ENCODE measurements at regions of chr10 and their contacts with region 1.

Region 1: DNA sequence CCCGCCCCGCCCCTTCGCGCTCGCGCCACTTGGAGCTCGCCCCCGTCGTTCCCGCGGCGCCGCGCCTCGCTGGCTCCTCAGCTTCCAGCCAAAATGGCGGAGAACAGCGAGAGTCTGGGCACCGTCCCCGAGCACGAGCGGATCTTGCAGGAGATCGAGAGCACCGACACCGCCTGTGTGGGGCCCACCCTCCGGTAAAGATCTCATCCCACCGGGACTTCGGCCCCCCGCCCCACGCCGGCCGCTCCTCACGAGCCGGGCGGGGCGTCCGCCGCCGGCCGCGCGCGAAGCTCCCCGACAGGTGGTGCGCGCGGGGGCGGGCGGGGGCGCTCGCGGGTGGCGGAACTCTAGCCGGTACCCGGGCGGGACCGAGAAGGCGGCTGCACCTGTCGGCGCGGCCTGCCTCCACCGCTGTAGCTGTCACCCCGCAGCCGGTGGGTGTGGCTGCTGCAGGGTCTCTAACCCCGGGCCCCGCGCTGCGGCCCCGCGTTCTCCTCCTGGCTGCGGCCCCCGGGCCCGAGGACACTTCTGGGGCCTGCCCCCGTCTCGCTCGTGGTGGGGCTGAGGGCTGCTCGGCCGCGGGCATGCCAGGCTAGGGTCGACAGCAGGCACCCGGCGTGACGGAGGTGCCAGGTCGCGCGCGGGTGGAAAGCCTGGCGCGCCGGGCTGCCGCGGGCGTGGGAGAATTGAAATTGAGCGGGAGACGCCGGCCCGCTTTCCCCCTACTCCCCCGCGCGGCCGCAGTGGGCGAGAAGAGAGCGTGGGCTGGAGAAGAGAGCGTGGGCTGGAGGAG is at the start of gene EXOC6:
- DNase-seq: peak; percentile 95
- H3K4me3 ChIP-seq: peak within 1 kb of the TSS; percentile 80 to 89
- H3K27ac ChIP-seq: peak within 1 kb of the TSS in 1 of 2 experiments; percentile 88; a peak in 2 of 4 replicates
- H3K4me1 ChIP-seq: no peaks in the 10 kb centered on the region; a peak in 2 of 4 replicates
- H3K27me3 ChIP-seq: no peaks in the 10 kb centered on the region
- CTCF ChIP-seq: 0 out of 2 replicates have a peak, but pooled peaks have one; percentile 9
- EP300 ChIP-seq: no peak
- RAD21 ChIP-seq: no peak
- polyA plus RNA-seq, gene EXOC6: 2.3 and 2.4 TPM in 2 replicates

Region 2: GRCh38 chr10:92822060-92822634 is 26.5 kb before region 1 on chr10:
- CTCF ChIA-PET with region 1: interaction called, 15 read pairs
- POLR2A ChIA-PET with region 1: no interaction called
- DNase-seq: no peak
- H3K4me3 ChIP-seq: no peak overlapping the region
- H3K27ac ChIP-seq: peak overlapping the region; percentile 47 to 80; a peak in 3 of 4 replicates
- H3K4me1 ChIP-seq: peaks cover 0 to 5% of the 10 kb centered on the region in 2 experiments; a peak in 3 of 4 replicates
- H3K27me3 ChIP-seq: no peaks in the 10 kb centered on the region
- CTCF ChIP-seq: no peak
- EP300 ChIP-seq: peak in 1 of 2 experiments; percentile 14; a peak in 1 of 4 replicates
- RAD21 ChIP-seq: no peak

Region 3: GRCh38 chr10:92832998-92833650 is 15.5 kb before region 1 on chr10:
- CTCF ChIA-PET with region 1: interaction called, 13 read pairs
- POLR2A ChIA-PET with region 1: interaction called, 3 read pairs
- DNase-seq: no peak
- H3K4me3 ChIP-seq: no peak overlapping the region
- H3K27ac ChIP-seq: no peak overlapping the region
- H3K4me1 ChIP-seq: peaks cover 0 to 16% of the 10 kb centered on the region in 2 experiments; a peak in 1 of 4 replicates
- H3K27me3 ChIP-seq: no peaks in the 10 kb centered on the region
- CTCF ChIP-seq: no peak
- EP300 ChIP-seq: no peak
- RAD21 ChIP-seq: no peak

Region 4: DNA sequence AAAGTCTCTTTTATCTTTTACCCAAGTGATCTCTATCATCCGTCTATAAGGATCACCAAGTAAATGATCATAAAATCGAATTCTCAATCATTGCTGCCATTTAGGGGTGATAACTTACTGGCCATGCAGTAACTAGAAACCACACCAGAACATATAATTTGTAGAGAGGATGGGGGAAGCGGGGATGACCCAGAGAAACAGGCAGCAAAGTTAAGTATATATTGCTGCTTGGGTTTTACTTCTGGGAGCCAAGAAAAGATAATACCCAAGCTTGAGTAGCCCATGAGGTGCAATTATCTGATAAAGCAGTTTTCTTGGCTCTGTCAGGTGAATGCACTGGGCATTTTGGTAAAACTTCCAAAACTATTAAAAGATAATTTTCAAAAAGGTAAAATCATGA is 18.6 kb after region 1 on chr10:
- CTCF ChIA-PET with region 1: interaction called, 11 read pairs
- POLR2A ChIA-PET with region 1: no interaction called
- DNase-seq: no peak
- H3K4me3 ChIP-seq: no peak overlapping the region
- H3K27ac ChIP-seq: no peak overlapping the region
- H3K4me1 ChIP-seq: no peaks in the 10 kb centered on the region
- H3K27me3 ChIP-seq: no peaks in the 10 kb centered on the region
- CTCF ChIP-seq: no peak
- EP300 ChIP-seq: no peak
- RAD21 ChIP-seq: no peak

Region 5: GRCh38 chr10:92880233-92880861 is 31.7 kb after region 1 on chr10:
- CTCF ChIA-PET with region 1: interaction called, 27 read pairs
- POLR2A ChIA-PET with region 1: no interaction called
- DNase-seq: peak; percentile 37
- H3K4me3 ChIP-seq: no peak overlapping the region
- H3K27ac ChIP-seq: no peak overlapping the region
- H3K4me1 ChIP-seq: no peaks in the 10 kb centered on the region
- H3K27me3 ChIP-seq: no peaks in the 10 kb centered on the region
- CTCF ChIP-seq: peak; percentile 76
- EP300 ChIP-seq: no peak
- RAD21 ChIP-seq: peak; percentile 78

Region 6: GRCh38 chr10:92886334-92886961 is 37.8 kb after region 1 on chr10:
- CTCF ChIA-PET with region 1: interaction called, 11 read pairs
- POLR2A ChIA-PET with region 1: no interaction called
- DNase-seq: no peak
- H3K4me3 ChIP-seq: no peak overlapping the region
- H3K27ac ChIP-seq: no peak overlapping the region
- H3K4me1 ChIP-seq: no peaks in the 10 kb centered on the region
- H3K27me3 ChIP-seq: no peaks in the 10 kb centered on the region
- CTCF ChIP-seq: no peak
- EP300 ChIP-seq: no peak
- RAD21 ChIP-seq: no peak

Region 7: DNA sequence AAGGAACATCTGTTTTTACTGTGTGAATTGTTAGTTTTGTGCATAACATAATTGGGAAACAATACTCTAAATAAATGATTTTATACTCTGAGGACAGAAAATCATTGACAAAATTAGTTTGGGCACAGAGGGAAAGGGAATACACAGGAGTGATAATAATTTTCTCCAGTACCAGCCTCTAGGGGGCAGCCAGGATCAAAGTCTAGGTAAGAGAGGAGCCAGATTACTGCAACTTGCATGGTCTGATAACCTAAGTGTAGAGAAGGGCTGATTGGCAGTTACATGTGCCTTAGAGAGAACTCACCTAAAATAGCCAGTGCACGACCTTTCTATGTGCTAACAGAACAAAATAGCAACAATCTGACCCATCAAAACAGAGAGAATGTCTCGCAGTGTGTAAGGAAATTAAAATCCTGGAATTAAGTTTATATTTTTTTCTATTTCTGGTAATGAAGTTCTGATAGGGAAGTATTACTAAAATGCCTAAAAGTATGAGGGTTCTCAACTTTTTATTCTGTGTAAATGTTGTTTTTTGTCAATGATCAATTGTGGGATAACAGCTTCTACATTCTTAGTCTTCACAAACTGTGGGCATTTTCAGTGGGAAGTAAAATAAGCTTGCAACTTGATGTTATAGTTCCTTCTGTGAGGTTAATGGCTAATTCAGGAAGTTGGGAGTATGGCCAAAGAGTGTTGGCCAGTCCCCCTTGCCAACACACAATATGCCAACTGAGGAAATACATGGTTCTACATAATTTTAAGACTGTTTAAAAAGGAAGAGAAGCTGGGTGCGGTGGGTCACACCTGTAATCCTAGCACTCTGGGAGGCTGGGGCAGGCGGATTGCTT is 66.1 kb after region 1 on chr10:
- CTCF ChIA-PET with region 1: no interaction called
- POLR2A ChIA-PET with region 1: no interaction called
- DNase-seq: peak; percentile 41
- H3K4me3 ChIP-seq: no peak overlapping the region
- H3K27ac ChIP-seq: no peak overlapping the region
- H3K4me1 ChIP-seq: peaks cover 0 to 2% of the 10 kb centered on the region in 2 experiments; a peak in 1 of 4 replicates
- H3K27me3 ChIP-seq: no peaks in the 10 kb centered on the region
- CTCF ChIP-seq: peak; percentile 78
- EP300 ChIP-seq: no peak
- RAD21 ChIP-seq: peak; percentile 54

Measured in SK-N-SH (cell line).